ENCODE measurements at regions of chr10 and their contacts with region 1.

Region 1: GRCh38 chr10:133309111-133309719 is 501 bp downstream of the ZNF511 start:
- DNase-seq: peak; percentile 85
- H3K4me3 Mint-ChIP-seq: peak overlapping the region; percentile 62
- H3K27ac Mint-ChIP-seq: peak overlapping the region; percentile 82
- H3K4me1 Mint-ChIP-seq: peaks cover 17% of the 10 kb centered on the region
- H3K27me3 Mint-ChIP-seq: no peaks in the 10 kb centered on the region

Region 2: DNA sequence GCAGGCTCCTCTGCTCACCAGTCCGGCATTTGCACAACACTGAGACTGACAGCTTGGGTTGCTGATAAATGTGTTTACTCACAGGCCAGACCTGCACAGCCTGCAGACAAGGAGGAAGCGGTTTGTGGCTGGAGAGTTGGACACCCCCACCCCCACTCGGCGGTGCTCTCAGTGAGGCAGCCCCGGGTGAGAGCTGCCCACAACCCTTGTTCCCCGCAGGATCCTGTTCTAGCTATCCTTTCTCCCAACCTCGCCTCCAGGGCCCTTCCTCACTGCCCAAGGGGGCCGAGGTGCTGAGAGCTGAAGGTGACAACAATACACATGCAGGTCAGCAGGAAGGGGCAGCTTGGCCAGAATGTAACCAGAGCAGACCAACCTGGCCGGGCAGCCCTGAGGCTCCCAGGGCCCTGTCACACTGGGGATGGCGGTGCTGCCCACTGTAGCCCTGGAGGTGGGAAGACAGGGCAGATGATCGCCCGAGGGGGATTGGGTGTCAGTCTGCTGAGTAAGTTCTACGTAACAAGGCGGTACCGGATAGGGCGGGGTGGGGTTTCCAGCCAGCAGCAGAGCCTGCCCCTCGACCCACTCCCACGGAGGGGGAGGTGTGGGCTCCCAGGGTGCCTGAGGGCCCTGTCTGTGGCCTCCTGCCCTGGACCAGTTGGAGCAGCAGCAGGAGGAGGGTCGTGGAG is 30.5 kb before region 1 on chr10:
- intact Hi-C with region 1: loop called (anchors 1 kb)
- DNase-seq: peak; percentile 63
- H3K4me3 Mint-ChIP-seq: peak overlapping the region; percentile 87
- H3K27ac Mint-ChIP-seq: peak overlapping the region; percentile 86
- H3K4me1 Mint-ChIP-seq: peaks cover 14% of the 10 kb centered on the region
- H3K27me3 Mint-ChIP-seq: no peaks in the 10 kb centered on the region

Region 3: DNA sequence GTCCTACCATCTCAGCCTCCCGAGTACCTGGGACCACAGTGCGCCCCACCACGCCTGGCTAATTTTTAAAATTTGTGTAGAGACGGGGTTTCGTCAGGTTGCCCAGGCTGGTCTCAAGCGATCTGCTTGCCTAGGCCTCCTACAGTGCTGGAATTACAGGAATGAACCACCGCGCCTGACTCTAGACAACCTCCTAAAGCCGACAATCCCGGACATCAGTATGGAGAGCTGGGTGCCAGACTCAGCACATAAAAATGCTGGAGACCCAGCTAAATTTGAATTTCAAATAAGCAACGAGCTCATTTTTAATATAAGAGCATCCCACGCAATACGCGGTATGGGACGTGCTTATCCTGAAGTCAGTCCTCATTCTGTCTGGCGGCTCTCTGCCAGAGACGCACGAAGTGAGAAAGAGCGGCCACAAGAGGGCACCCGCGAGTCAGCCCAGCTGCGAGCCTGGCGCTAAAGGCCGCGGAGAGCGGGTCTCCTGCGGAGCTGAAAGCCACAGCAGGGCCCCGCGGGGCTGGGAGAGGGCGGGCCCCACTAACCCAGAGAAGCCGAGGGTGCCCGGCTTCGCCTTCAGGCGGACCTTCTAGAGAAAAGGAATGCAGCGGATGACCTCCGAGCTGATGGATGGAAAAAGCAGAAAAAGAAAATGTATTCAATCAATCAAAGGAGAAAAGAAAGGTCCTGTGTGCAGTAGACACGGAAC is 20.4 kb after region 1 on chr10:
- intact Hi-C with region 1: loop called (anchors 1 kb)
- DNase-seq: peak; percentile 77
- H3K4me3 Mint-ChIP-seq: peak overlapping the region; percentile 64
- H3K27ac Mint-ChIP-seq: no peak overlapping the region
- H3K4me1 Mint-ChIP-seq: peaks cover 3% of the 10 kb centered on the region
- H3K27me3 Mint-ChIP-seq: peaks cover 72% of the 10 kb centered on the region

Region 4: GRCh38 chr10:133357285-133358151 is 48.3 kb after region 1 on chr10 and contains the start of gene FUOM:
- intact Hi-C with region 1: loop called (anchors 1 kb)
- DNase-seq: peak; percentile 57
- H3K4me3 Mint-ChIP-seq: peak within 1 kb of the TSS; percentile 77
- H3K27ac Mint-ChIP-seq: peak within 1 kb of the TSS; percentile 48
- H3K4me1 Mint-ChIP-seq: no peaks in the 10 kb centered on the region
- H3K27me3 Mint-ChIP-seq: no peaks in the 10 kb centered on the region
- total RNA-seq, gene FUOM: 45.4 and 51.8 TPM in 2 replicates

Region 5: DNA sequence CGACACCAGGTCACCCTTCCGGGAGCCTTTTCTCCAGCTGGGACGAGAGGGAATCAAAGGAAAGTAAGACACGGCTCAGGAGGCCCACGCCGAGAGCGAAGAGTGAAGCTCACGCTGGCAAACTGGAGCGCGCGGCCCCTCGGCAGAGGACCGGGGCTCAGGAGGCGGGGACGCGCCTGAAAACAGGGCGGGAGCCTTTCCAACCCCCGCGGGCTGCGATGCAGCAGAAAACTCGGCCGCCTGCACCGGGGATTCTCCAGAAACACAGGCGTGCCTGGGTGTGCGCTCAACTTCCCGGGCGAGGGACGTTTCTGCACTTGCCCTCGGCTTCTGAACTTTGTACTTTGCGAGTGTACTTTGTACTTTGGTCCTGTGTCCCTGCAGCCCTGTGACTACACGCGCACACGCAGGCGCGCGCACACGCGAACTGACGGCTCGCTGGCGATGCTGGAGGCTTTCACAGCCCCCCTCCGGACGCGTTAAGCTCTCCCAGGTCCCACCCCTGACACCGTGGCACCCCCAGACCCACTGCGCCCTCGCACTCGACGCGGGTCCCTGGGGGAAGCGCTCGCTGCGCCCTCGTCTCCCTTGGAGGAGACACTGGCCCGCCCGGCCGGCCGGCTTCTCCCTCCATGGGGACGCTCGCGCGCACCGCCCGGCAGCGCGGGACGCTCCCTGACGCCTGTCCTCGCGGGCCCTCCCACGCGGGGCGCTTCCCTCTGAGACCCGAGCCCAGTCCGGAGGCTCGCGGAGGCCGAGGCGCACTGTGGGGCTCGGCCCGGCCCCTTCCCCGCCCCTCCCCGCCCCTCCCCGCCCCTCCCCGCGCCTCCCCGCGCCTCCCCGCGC is 69.3 kb after region 1 on chr10:
- intact Hi-C with region 1: loop called (anchors 1 kb)
- DNase-seq: peak; percentile 51
- H3K4me3 Mint-ChIP-seq: peak overlapping the region; percentile 79
- H3K27ac Mint-ChIP-seq: peak overlapping the region; percentile 44
- H3K4me1 Mint-ChIP-seq: peaks cover 11% of the 10 kb centered on the region
- H3K27me3 Mint-ChIP-seq: peaks cover 16% of the 10 kb centered on the region

Region 6: GRCh38 chr10:133465191-133465949 is 156.2 kb after region 1 on chr10:
- intact Hi-C with region 1: no loop called
- DNase-seq: no peak
- H3K4me3 Mint-ChIP-seq: no peak overlapping the region
- H3K27ac Mint-ChIP-seq: no peak overlapping the region
- H3K4me1 Mint-ChIP-seq: no peaks in the 10 kb centered on the region
- H3K27me3 Mint-ChIP-seq: no peaks in the 10 kb centered on the region